A673 (cell line): ENCODE measurements at regions of chr1 and their contacts with region 1.

Region 1: DNA sequence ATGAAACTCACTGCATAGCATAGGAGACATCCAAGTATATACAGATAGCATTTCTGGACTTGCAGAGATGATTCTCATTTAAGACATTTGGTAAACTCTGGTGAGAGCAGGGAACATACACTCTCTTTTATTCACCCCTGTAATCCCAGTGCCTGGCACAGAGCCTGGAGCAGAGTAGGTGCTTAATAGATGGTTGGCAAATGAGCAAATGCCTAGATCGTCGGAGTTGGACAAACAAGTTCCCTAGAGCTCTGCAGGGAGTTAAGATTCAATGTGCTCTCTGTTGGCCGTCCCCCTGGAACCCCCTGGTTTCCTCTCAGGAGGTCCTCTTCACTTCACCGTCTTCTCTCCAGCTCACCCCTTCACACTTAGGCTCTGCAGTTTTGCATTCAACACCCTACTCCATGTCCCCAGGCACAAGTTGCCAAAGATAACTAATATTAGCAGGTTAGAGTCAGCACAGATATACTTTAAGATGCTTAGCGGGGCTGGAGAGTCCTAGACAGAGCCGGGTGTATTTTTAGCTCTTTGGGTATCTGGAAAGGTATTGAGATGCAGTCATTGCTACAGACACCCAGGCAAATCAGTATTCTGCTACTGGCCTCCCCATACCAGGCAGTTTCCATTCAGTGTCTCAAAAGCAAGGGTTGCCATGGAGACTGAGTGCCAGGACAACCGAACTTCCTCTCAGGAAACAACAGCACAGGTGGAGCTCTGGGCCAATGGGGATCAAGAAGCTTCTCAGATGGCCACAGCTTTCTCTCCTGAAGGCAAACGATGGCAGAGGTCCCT is 45.1 kb downstream of the KCNC4 start:
- DNase-seq: no peak
- H3K4me3 ChIP-seq: no peak overlapping the region
- H3K27ac ChIP-seq: no peak overlapping the region
- H3K4me1 ChIP-seq: no peaks in the 10 kb centered on the region
- H3K27me3 ChIP-seq: peaks cover 14% of the 10 kb centered on the region
- CTCF ChIP-seq: no peak

Region 2: GRCh38 chr1:109041621-109042468 is 1213.3 kb before region 1 on chr1 and contains the start of gene WDR47:
- CTCF ChIA-PET with region 1: no interaction called
- POLR2A ChIA-PET with region 1: interaction called, 12 read pairs
- intact Hi-C with region 1: no loop called
- DNase-seq: peak; percentile 99
- H3K4me3 ChIP-seq: peak within 1 kb of the TSS; percentile 97
- H3K27ac ChIP-seq: peak within 1 kb of the TSS; percentile 75
- H3K4me1 ChIP-seq: peaks cover 3% of the 10 kb centered on the region
- H3K27me3 ChIP-seq: no peaks in the 10 kb centered on the region
- CTCF ChIP-seq: no peak
- total RNA-seq, gene WDR47: 17.4 and 21.0 TPM in 2 replicates

Region 3: DNA sequence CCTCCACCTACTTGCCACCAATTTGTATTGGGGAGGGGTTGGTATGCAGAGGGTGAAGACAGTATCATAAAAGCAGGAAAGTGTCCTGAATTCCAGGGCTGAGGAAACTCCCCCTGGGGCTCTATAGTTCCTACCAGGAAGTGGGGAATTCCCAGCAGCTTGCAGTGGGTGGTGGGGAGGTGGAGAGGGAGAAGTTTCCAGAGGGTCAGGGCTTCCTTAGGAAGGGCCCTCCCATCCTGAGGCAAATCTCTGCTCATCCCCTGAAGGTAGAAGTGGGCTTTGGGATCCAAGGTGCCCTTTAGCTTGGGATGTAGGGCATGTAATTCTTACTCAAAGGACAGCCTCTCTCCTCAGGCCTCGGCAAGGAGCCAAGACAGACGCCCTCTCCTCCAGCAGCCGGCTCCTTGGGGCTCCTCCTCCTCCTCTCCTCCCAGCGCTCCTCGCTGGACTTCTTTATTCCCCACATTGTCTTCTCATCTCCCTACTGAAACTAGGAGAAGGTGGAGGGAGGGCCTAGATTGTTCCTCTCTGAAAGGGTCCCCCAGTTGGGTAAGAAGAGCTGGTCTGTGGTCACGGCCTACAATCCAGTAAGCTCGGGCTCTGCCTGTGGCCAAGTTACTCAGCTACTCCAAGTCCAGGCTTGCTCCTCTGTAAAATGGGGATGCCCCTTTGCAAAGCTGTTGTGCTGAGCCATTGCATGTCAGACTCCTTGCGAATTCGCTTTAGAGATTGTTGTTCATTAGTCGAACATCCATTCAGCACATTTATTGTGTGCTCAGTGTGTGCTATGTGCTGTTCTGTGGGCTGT is 362.4 kb before region 1 on chr1:
- CTCF ChIA-PET with region 1: no interaction called
- POLR2A ChIA-PET with region 1: no interaction called
- intact Hi-C with region 1: no loop called
- DNase-seq: no peak
- H3K4me3 ChIP-seq: no peak overlapping the region
- H3K27ac ChIP-seq: no peak overlapping the region
- H3K4me1 ChIP-seq: no peaks in the 10 kb centered on the region
- H3K27me3 ChIP-seq: no peaks in the 10 kb centered on the region
- CTCF ChIP-seq: no peak